ENCODE measurements at regions of chr6 and their contacts with region 1.

Region 1: DNA sequence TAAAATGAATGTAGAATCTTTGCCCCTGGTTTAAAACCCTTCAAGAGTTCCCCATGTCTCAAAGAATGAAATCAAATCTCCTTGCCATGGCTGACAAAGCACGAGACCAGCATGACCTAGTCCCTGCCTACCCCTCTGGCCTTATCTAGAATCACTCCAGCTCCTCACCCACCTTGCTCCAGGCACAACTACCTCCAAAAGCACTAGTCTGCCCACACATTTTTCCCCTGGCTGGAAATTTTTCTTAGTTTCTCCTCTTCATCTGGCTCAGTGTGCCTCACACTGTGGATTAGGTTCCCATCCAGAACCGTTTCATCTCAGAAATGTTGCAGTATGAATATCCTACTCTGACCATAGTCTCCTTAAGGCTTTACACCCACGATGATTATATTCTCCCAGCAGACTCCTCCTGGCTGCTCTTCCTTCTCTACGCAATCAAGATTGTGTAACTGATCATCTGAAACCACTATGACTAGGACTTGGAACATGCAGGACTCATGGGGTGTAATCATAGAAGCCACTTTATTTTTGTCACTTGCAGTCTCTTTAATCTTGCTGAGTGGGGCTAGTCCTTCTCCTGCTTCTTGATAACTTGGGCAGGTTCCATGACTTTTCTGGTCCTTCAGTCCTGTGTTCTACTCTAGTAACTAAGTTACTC is 7.8 kb upstream of the MRS2 start:
- DNase-seq: no peak
- ATAC-seq: no peak
- H3K4me3 ChIP-seq: no peak overlapping the region
- H3K27ac ChIP-seq: no peak overlapping the region
- H3K4me1 ChIP-seq: no peaks in the 10 kb centered on the region
- H3K27me3 ChIP-seq: no peaks in the 10 kb centered on the region

Region 2: DNA sequence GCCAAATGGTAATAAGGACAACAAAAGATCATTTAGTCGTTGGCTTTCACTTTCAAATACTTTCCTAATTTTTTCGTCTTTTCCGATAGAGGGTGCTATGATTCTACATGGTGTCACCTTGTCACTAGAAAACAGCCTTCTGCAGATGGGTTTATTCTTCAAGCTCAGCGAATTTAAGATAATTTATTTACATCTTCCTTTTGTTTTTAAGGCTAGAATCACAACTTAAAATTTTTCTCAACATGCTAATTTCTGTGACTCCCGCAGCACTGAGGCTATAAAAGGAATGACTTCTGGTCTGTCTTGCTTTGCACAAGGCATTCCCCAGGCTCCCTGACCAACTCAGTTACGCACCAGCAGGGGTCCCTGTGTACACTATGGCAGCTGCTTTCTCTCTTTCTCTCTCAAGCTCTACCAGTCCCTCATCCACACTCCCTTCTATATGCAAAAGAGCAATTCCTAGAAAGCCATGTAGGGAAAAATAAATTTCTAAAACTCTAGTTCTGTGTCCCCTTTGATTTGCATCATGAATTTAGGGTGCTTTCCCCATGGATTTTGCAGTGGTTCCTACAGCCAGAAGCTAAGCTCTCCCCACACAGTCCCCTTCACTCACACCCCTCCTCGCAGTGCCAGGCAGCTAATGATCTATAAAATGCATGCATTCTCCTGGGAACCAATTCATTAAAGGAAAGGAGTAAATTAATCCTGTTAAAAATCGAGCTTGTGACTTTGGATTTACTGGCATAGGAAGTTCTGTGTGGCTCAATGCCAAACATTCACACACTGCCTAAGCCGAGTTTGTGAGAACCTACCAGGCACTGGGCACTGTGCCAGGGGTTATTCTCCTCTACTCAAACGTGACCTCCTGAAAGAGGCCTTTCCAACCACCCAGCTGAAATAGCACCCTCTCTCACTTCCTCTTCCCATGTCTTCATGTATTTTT is 111.6 kb before region 1 on chr6:
- intact Hi-C with region 1: loop called in 1 of 2 experiments (anchors 5 kb)
- DNase-seq: peak in 1 of 2 donors; percentile 88
- ATAC-seq: peak; percentile 70
- H3K4me3 ChIP-seq: peak overlapping the region in 1 of 2 donors; percentile 48
- H3K27ac ChIP-seq: no peak overlapping the region
- H3K4me1 ChIP-seq: no peaks in the 10 kb centered on the region
- H3K27me3 ChIP-seq: no peaks in the 10 kb centered on the region